ENCODE measurements at regions of chr12 and their contacts with region 1.

Region 1: GRCh38 chr12:120971299-120972179 is 6.8 kb upstream of the HNF1A start:
- DNase-seq: peak in 4 of 10 donors; percentile 4 to 69 (median 18)

Region 2: GRCh38 chr12:120583478-120584030 is 388.0 kb before region 1 on chr12:
- intact Hi-C with region 1: loop called (anchors 1 kb)
- DNase-seq: peak; percentile 62 to 97 (median 82)

Region 3: GRCh38 chr12:120649442-120650232 is 321.9 kb before region 1 on chr12:
- intact Hi-C with region 1: loop called (anchors 2 kb)
- DNase-seq: peak in 6 of 10 donors; percentile 45 to 91 (median 72)

Region 4: GRCh38 chr12:120725659-120726509 is 245.7 kb before region 1 on chr12 and contains the start of gene ACADS:
- intact Hi-C with region 1: loop called (anchors 10 kb)
- DNase-seq: peak; percentile 62 to 97 (median 80)

Measured in posterior cingulate gyrus (tissue), 11 donors.